ENCODE measurements at regions of chr15 and their contacts with region 1.

Region 1: GRCh38 chr15:74540761-74541493 is at the start of gene ARID3B:
- DNase-seq: peak; percentile 99
- ATAC-seq: peak; percentile 99
- total RNA-seq, gene ARID3B: 2.1 to 2.6 TPM

Region 2: DNA sequence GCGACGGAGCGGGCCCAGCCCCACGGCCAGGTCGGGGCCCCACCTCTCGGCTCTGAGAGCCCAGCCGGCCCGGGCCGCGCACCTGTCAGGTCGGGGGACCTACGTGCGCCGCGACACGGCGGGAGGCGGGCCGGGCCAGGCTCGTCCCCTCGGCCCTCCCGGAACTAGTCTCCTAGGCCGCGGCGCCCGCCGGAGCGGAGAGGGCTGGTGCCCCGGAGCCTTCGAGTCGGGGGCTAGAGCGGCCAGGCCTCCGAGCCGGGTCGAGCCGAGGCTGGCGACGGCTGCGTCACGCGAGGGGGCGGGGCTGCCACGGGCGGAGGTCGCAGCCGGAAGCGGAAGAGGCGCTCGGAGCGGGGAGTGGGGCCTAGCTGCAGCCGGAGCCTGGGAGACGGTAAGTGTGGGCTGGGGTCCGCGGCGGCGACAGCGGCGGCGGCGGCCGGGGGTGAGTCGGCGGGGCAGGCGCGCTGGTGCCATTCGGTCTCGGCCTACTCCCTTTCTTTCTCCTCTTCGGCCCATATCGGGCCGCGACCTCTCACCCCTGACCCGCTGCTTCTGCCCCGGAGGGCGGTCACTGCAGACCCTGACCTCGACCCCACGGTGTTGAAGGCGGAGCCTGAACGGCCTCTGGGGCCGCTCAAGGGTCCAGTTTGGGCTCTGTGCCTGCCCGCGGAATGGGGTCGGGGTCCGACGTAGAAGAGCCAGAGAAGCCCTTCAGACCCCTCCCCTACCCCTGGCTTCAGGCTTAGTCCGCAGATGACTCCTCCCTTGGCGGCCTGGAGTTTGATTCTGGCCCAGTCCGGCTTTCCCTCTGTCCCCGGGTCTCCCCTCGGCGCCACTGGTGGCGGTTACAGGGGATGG is 74.8 kb after region 1 on chr15 and contains the start of gene CLK3:
- intact Hi-C with region 1: loop called in 1 of 2 experiments (anchors 5 kb)
- DNase-seq: peak; percentile 97
- ATAC-seq: peak; percentile 90 to 91
- total RNA-seq, gene CLK3: 44.2 to 44.3 TPM

Region 3: GRCh38 chr15:74695597-74696397 is 154.9 kb after region 1 on chr15 and contains the start of gene EDC3:
- intact Hi-C with region 1: no loop called
- DNase-seq: peak; percentile 94
- ATAC-seq: peak; percentile 99
- total RNA-seq, gene EDC3: 19.7 to 19.8 TPM